Posterior cingulate gyrus (tissue), 11 donors: ENCODE measurements at regions of chr10 and their contacts with region 1.

Region 1: DNA sequence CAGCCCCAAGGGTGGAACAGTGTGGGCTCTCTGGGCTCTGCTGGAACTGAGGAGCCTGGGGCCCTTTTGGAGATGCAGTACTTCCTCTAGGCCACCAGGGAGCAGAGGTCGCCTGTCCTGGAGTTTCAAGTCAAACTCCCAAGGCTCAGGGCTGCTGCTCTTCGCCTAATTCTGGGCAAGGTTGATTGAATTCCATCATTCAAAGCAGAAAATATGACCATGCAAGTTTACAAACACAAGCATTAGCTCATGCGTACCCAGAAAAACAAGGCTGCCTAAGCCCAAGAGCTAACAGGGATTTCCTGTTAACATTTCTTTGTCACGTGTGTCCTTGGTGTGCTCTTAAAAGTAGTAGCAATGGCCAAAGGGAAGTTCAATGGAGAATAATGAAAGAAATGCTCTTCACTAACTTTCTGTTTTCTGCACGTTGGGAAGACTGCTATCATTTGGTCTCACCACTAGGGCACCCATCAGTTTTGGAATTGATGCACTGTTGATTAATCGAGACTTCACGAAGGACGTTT is 20.1 kb downstream of the LDB3 start:
- DNase-seq: peak in 6 of 10 donors; percentile 52 to 93 (median 60)

Region 2: DNA sequence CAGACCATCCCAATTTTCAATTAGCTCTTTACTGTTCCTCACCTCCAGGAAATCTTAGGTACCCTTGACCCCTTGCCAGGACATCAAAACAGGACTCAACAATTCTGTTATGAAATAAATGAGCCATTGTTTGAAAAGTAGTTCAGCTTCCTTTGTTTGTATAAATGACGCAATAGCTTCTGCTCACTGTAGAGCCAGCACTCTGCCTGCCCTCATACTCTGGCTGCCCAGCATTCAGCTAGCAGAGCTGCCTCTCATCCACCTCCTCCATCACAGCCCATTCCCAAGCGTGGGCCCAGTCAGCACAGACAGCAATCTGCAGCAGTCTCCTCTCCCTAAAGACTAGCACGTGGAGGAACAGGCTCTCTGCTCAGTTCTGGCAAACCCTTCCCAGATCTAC is 800.5 kb before region 1 on chr10:
- intact Hi-C with region 1: no loop called
- DNase-seq: peak; percentile 23 to 93 (median 56)

Region 3: GRCh38 chr10:86521678-86522509 is 166.6 kb before region 1 on chr10 and contains the start of gene WAPL:
- intact Hi-C with region 1: no loop called
- DNase-seq: peak; percentile 92 to 99 (median 94)

Region 4: GRCh38 chr10:86644152-86644793 is 44.2 kb before region 1 on chr10:
- intact Hi-C with region 1: loop called (anchors 1 kb)
- DNase-seq: no peak

Region 5: GRCh38 chr10:86775056-86775869 is 86.8 kb after region 1 on chr10:
- intact Hi-C with region 1: no loop called
- DNase-seq: no peak